SK-N-SH (cell line): ENCODE measurements at regions of chr10 and their contacts with region 1.

Region 1: GRCh38 chr10:6136215-6137201 is 47.7 kb downstream of the RBM17 start:
- DNase-seq: peak; percentile 29
- H3K4me3 ChIP-seq: peak overlapping the region; percentile 2 to 6; a peak in 2 of 4 replicates
- H3K27ac ChIP-seq: peak overlapping the region in 1 of 2 experiments; percentile 56; a peak in 2 of 4 replicates
- H3K4me1 ChIP-seq: peaks cover 0 to 3% of the 10 kb centered on the region in 2 experiments; a peak in 1 of 4 replicates
- H3K27me3 ChIP-seq: no peaks in the 10 kb centered on the region; the same call in 1 of the 2 replicates
- CTCF ChIP-seq: no peak
- EP300 ChIP-seq: peak in 1 of 2 experiments; percentile 45; a peak in 1 of 4 replicates
- RAD21 ChIP-seq: no peak

Region 2: DNA sequence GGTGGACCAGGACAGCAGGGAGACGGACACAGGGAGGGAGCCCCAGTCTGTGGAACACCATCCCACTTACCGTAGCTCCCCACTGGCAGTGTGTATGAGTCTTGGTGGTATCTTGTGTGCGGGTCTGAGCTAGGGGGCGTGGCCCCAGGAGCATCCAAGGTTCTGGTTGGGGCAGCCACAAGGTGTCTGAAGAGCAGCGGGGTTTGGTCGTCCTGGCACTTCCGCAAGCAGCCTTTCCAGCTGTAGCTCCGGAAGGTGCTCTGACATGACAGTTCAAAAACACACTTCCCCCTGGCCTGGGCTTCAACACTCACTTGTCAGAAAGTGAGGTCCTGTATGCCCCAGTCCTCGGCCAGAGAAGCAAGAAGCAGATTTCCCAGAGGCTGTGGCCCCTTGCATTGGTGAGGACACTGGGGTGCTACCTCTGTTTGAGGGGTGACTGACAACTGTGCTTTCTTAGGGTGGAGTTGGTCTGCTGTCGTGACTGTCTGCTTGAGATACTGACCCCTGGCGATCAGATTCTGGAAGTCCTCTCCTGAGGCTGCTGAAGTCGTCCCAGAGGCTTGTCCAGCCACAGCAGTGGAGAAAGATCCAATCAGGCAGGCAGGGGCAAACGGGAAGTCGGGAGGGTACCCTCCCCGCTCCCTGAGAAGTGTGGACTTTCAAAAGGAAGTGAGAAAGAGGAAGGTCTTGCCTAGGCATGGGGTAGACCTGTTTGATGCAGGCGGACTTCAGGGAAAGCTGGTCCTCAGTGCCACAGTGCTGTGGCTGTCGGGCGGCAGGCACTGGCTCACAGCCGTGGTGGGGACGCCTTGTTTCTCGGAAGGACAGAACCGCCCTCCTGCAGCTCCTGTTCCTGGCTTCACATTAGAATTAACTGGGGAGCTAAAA is 14.8 kb after region 1 on chr10:
- CTCF ChIA-PET with region 1: interaction called, 13 read pairs
- POLR2A ChIA-PET with region 1: interaction called, 4 read pairs
- DNase-seq: peak; percentile 56
- H3K4me3 ChIP-seq: peak overlapping the region in 1 of 2 experiments; percentile 48; a peak in 1 of 4 replicates
- H3K27ac ChIP-seq: no peak overlapping the region
- H3K4me1 ChIP-seq: no peaks in the 10 kb centered on the region; a peak in 1 of 4 replicates
- H3K27me3 ChIP-seq: no peaks in the 10 kb centered on the region
- CTCF ChIP-seq: peak; percentile 60
- EP300 ChIP-seq: no peak
- RAD21 ChIP-seq: peak; percentile 20

Region 3: DNA sequence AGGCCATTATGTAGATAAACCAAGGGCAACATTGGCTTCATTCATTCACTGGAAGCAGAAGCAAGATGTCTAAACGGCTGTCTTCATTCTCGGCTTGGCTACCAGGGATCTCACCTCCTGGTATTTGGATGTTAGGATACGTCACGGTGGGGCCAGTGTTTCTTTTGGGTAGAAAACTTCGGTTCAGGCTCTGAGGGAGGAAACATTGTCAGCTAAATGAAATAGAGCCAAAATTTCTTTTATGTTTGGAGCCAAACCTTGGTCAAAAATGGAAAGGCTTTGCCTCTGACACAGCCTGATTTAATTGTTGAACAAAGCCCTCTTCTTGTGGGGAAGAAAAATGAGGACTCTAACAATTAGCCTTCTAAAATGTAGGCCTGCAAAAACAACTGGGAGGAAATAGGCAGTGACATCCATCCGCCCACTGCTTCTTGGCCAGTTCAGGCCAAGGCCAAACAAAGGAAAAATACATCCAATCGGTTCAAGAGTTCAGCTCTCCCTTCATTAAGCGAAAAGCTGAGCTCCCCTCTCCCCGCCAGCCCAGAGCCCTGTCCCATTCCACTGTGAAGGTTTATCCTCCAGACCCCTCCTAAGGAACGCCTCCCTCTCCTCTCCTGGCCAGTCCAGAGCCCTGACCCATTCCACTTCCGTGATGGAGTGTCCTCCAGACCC is 110.7 kb after region 1 on chr10:
- CTCF ChIA-PET with region 1: no interaction called
- POLR2A ChIA-PET with region 1: no interaction called
- DNase-seq: no peak
- H3K4me3 ChIP-seq: no peak overlapping the region
- H3K27ac ChIP-seq: peak overlapping the region; percentile 51 to 80
- H3K4me1 ChIP-seq: no peaks in the 10 kb centered on the region; a peak in 1 of 4 replicates
- H3K27me3 ChIP-seq: no peaks in the 10 kb centered on the region
- CTCF ChIP-seq: no peak
- EP300 ChIP-seq: peak in 1 of 2 experiments; percentile 63; a peak in 2 of 4 replicates
- RAD21 ChIP-seq: no peak

Region 4: GRCh38 chr10:6314620-6315205 is 178.2 kb after region 1 on chr10:
- CTCF ChIA-PET with region 1: no interaction called
- POLR2A ChIA-PET with region 1: no interaction called
- DNase-seq: no peak
- H3K4me3 ChIP-seq: no peak overlapping the region
- H3K27ac ChIP-seq: no peak overlapping the region
- H3K4me1 ChIP-seq: no peaks in the 10 kb centered on the region
- H3K27me3 ChIP-seq: no peaks in the 10 kb centered on the region
- CTCF ChIP-seq: no peak
- EP300 ChIP-seq: no peak
- RAD21 ChIP-seq: no peak